ENCODE measurements at regions of chr17 and their contacts with region 1.

Region 1: GRCh38 chr17:49755663-49756283 is 8.2 kb downstream of the FAM117A start:
- DNase-seq: no peak
- ATAC-seq: no peak
- H3K4me3 ChIP-seq: no peak overlapping the region
- H3K4me3 Mint-ChIP-seq: peak overlapping the region in 9 of 10 donors; percentile 16 to 69 (median 58)
- H3K27ac ChIP-seq: peak overlapping the region; percentile 34
- H3K27ac Mint-ChIP-seq: peak overlapping the region; percentile 39 to 93 (median 77)
- H3K4me1 ChIP-seq: peaks cover 42 to 71% of the 10 kb centered on the region in 2 donors
- H3K4me1 Mint-ChIP-seq: peaks cover 50 to 85% (median 78%) of the 10 kb centered on the region in 7 donors
- H3K27me3 ChIP-seq: no peaks in the 10 kb centered on the region
- H3K27me3 Mint-ChIP-seq: no peaks in the 10 kb centered on the region

Region 2: GRCh38 chr17:49739641-49740271 is 16.0 kb before region 1 on chr17:
- CTCF ChIA-PET with region 1: interaction called, 4 read pairs
- POLR2A ChIA-PET with region 1: interaction called, 318 read pairs
- intact Hi-C with region 1: no loop called
- DNase-seq: peak; percentile 69 to 99 (median 98)
- ATAC-seq: peak; percentile 99
- H3K4me3 ChIP-seq: peak overlapping the region; percentile 67
- H3K4me3 Mint-ChIP-seq: peak overlapping the region; percentile 80 to 95 (median 90)
- H3K27ac ChIP-seq: peak overlapping the region; percentile 96
- H3K27ac Mint-ChIP-seq: peak overlapping the region; percentile 97 to 100 (median 99)
- H3K4me1 ChIP-seq: peaks cover 77 to 83% of the 10 kb centered on the region in 2 donors
- H3K4me1 Mint-ChIP-seq: peaks cover 62 to 97% (median 79%) of the 10 kb centered on the region in 7 donors
- H3K27me3 ChIP-seq: no peaks in the 10 kb centered on the region
- H3K27me3 Mint-ChIP-seq: no peaks in the 10 kb centered on the region

Measured in naive thymus-derived CD4-positive, alpha-beta T cell (primary cell).